Activated CD4-positive, alpha-beta memory T cell treated with anti-CD3 and anti-CD28 coated beads, Interleukin-2, amount 10 ng/mL, durations not matched to agents 7 days and 5 days (primary cell): ENCODE measurements at regions of chr1 and their contacts with region 1.

Region 1: DNA sequence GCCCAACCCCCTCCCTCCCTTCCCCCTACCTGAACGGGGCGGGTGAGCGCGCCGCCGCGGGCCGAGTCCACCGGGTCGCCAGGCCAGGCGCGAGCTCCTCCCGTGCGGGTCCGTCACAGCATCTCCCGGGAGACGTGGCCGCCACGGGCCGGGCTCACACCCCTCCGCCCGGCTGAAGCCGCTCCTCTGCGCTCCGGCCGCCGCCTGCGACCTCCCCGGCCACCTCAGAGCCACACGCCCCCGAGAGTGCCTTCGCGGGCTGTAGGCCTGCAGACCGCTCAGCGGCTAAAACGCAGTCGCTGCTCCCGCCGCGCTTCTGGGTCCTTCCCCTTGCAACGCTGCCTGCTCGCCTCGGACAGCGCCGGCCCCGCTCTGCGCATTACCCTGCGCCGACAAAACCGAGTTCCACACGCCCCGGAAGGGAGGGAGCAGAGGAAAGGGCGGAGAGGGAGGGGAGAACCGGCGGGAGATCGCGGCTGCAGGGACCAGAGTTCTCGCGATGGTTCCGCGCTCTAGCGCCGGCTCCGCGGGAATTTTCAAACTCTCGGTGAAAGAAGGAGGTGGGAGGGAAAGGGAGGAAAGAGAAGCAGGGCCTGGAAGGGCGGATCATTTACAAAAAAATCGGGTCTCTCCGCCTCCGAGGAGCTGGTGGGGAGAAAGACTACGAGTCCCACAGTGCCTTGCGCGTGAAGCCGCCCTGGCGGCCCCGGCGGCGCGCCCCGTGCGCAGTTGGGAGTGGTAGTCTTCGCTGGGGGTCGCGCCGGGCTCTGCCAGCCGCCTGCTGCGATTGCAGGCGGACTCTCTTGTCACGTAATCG is at the start of gene AHCTF1:
- DNase-seq: peak; percentile 94
- H3K4me3 Mint-ChIP-seq: peak within 1 kb of the TSS; percentile 96
- H3K27ac Mint-ChIP-seq: peak within 1 kb of the TSS; percentile 94
- H3K4me1 Mint-ChIP-seq: peaks cover 30% of the 10 kb centered on the region
- H3K27me3 Mint-ChIP-seq: no peaks in the 10 kb centered on the region
- total RNA-seq, gene AHCTF1: 26.9 to 27.8 TPM

Region 2: DNA sequence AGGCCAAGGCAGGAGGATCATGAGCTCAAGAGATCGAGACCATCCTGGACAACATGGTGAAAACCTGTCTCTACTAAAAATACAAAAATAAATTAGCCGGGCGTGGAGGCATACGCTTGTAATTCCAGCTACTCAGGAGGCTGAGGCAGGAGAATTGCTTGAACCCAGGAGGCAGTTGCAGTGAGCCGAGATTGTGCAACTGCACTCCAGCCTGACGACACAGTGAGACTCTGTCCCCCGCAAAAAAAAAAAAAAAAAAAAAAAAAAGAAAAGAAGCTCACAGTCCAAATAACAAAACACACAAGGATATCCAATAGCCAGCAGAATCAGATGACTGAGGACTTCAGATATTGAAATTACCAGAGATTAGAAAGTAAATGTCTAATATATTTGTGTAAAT is 11.9 kb before region 1 on chr1:
- CTCF ChIA-PET with region 1: no interaction called
- POLR2A ChIA-PET with region 1: interaction called, 11 read pairs
- DNase-seq: no peak
- H3K4me3 Mint-ChIP-seq: no peak overlapping the region
- H3K27ac Mint-ChIP-seq: no peak overlapping the region
- H3K4me1 Mint-ChIP-seq: peaks cover 11% of the 10 kb centered on the region
- H3K27me3 Mint-ChIP-seq: no peaks in the 10 kb centered on the region